Common myeloid progenitor, CD34-positive (primary cell): ENCODE measurements at regions of chr2 and their contacts with region 1.

Region 1: DNA sequence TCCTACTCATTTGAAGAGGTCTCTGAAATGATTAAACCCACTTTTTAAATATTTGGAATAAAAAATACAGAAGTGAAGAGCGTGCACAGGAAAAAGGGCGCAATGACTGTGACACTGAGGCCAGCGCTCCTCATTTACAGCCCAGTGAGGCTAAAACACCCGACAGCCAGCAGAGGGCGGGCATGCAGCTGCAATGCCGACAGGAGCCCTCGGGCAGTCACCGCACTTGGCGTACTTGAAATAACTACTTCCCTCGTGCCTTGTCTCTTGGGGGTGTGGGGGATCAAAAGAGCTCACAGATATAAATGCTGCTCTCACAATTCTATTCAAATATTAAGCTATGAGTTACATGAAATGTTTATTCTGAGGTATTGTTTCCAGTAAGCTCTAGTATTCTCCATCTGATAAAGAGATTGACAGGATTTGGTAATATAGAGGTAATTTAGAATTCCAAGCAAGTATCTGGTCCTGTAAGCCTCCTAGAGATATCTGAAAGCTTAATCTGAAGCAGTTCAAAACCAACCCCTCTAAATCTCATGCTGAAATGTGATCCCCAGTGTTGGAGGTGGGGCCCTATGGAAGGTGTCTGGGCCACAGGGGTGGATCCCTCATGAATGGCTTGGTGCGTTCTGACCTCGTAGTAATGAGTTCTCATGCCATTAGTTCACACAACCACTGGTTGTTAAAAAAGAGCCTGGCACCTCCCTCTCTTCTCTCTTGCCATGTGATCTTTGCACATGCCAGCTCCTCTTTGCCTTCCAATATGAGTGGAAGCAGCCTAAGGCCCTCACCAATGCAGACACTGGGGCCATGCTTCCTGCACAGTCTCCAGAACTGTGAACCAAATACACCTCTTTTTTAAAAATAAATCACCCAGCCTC is 93.6 kb downstream of the ZAP70 start:
- DNase-seq: peak; percentile 69 to 90 (median 87)
- H3K4me3 ChIP-seq: no peak overlapping the region
- H3K27ac ChIP-seq: no peak overlapping the region
- H3K4me1 ChIP-seq: no peaks in the 10 kb centered on the region
- H3K27me3 ChIP-seq: no peaks in the 10 kb centered on the region

Region 2: GRCh38 chr2:98269274-98269673 is 462.3 kb after region 1 on chr2:
- CTCF ChIA-PET with region 1: interaction called, 14 read pairs
- POLR2A ChIA-PET with region 1: no interaction called
- DNase-seq: peak; percentile 47 to 71 (median 62)
- H3K4me3 ChIP-seq: no peak overlapping the region
- H3K27ac ChIP-seq: no peak overlapping the region
- H3K4me1 ChIP-seq: no peaks in the 10 kb centered on the region
- H3K27me3 ChIP-seq: peaks cover 0 to 2% (median 0%) of the 10 kb centered on the region in 5 experiments

Region 3: GRCh38 chr2:98311721-98312120 is 504.7 kb after region 1 on chr2:
- CTCF ChIA-PET with region 1: no interaction called
- POLR2A ChIA-PET with region 1: no interaction called
- DNase-seq: no peak
- H3K4me3 ChIP-seq: no peak overlapping the region
- H3K27ac ChIP-seq: no peak overlapping the region
- H3K4me1 ChIP-seq: no peaks in the 10 kb centered on the region
- H3K27me3 ChIP-seq: peaks cover 0 to 29% (median 6%) of the 10 kb centered on the region in 5 experiments

Region 4: GRCh38 chr2:98385050-98385699 is 578.2 kb after region 1 on chr2:
- CTCF ChIA-PET with region 1: interaction called, 46 read pairs
- POLR2A ChIA-PET with region 1: no interaction called
- DNase-seq: peak; percentile 65 to 88 (median 84)
- H3K4me3 ChIP-seq: no peak overlapping the region
- H3K27ac ChIP-seq: no peak overlapping the region
- H3K4me1 ChIP-seq: peaks cover 0 to 3% (median 0%) of the 10 kb centered on the region in 4 experiments
- H3K27me3 ChIP-seq: peaks cover 0 to 2% (median 0%) of the 10 kb centered on the region in 5 experiments